ENCODE measurements at regions of chr1 and their contacts with region 1.

Region 1: GRCh38 chr1:202112839-202113672 is 9.7 kb upstream of the GPR37L1 start:
- DNase-seq: peak; percentile 62 to 85
- ATAC-seq: peak; percentile 76 to 80
- H3K4me3 ChIP-seq: no peak overlapping the region
- H3K27ac ChIP-seq: peak overlapping the region; percentile 88 to 94
- H3K4me1 ChIP-seq: peaks cover 73% of the 10 kb centered on the region
- CTCF ChIP-seq: no peak
- EP300 ChIP-seq: no peak; a peak in 1 of 5 replicates
- POLR2A ChIP-seq: no peak
- RAD21 ChIP-seq: peak; percentile 24 to 25; a peak in 3 of 5 replicates

Region 2: DNA sequence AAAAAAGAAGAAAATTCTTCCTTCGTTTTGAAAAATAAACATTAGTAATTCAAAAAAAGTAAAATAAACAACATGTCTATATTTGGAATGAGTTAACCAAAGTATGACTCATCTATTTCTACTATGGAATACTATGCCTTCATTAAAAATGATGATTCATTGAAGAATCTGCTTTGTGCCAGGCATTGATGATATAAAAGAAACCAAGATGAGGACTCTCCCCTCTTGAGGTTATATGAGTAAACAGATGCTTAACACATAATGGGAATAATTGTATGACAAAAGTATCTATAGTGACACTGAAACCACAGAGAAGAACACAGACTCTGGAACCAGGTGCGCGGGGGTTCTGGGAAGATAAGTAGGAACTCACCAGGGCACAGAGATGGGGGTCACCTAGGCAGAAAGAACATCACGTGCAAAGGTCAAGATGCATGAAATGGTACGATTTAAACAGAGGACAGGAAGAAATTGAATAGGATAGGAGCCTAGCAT is 83.8 kb before region 1 on chr1:
- CTCF ChIA-PET with region 1: interaction called, 1,624 read pairs
- POLR2A ChIA-PET with region 1: interaction called, 9 read pairs
- DNase-seq: peak; percentile 75 to 83
- ATAC-seq: peak; percentile 52 to 75; a peak in 3 of 6 replicates
- H3K4me3 ChIP-seq: no peak overlapping the region
- H3K27ac ChIP-seq: peak overlapping the region; percentile 61 to 86
- H3K4me1 ChIP-seq: peaks cover 52% of the 10 kb centered on the region
- CTCF ChIP-seq: no peak
- EP300 ChIP-seq: no peak
- POLR2A ChIP-seq: no peak
- RAD21 ChIP-seq: no peak

Region 3: DNA sequence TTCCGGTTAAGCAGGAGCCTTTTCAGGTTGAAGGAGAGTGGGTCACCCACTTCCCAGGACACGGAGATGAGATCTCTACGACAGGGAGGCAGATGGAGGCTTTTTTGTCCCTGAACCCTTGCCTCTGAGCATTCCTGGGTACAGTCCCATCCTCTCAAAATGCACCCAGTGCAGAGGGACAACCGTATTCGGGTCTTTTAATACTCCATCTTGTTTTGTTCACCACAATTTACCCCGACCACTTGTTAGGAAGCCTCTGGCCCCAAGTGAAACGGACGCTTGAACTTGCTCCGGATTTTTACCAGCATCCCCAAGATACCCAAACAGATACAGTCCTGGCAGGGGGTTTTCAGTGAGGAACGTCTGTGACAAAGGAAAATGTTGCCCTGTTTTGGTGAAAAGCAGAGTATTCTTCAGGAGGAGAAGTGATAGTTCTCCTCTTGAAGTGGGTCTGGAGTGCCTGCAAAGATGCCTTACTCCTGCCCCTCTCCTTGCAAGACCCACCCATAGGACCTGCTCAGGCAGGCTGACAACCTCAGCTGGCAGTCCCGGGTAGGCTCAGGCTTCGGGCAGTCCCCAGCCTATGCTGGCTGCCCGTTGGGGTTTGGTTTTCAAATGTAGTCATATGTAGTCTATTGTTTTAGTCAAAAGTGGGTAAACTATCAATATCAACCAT is 32.1 kb after region 1 on chr1:
- CTCF ChIA-PET with region 1: no interaction called
- POLR2A ChIA-PET with region 1: no interaction called
- DNase-seq: no peak
- ATAC-seq: peak; percentile 31 to 59; a peak in 3 of 6 replicates
- H3K4me3 ChIP-seq: peak overlapping the region; percentile 94
- H3K27ac ChIP-seq: peak overlapping the region; percentile 95 to 98
- H3K4me1 ChIP-seq: peaks cover 13% of the 10 kb centered on the region; the same call in 2 of the 3 replicates
- CTCF ChIP-seq: no peak
- EP300 ChIP-seq: no peak
- POLR2A ChIP-seq: no peak
- RAD21 ChIP-seq: no peak

Region 4: GRCh38 chr1:202164271-202165037 is 51.4 kb after region 1 on chr1:
- CTCF ChIA-PET with region 1: no interaction called
- POLR2A ChIA-PET with region 1: no interaction called
- DNase-seq: no peak
- ATAC-seq: peak in 1 of 2 experiments; percentile 13; a peak in 3 of 6 replicates
- H3K4me3 ChIP-seq: no peak overlapping the region
- H3K27ac ChIP-seq: no peak overlapping the region
- H3K4me1 ChIP-seq: peaks cover 8% of the 10 kb centered on the region; the same call in 2 of the 3 replicates
- CTCF ChIP-seq: no peak
- EP300 ChIP-seq: no peak
- POLR2A ChIP-seq: no peak
- RAD21 ChIP-seq: no peak

Region 5: GRCh38 chr1:202184750-202185460 is 71.8 kb after region 1 on chr1:
- CTCF ChIA-PET with region 1: no interaction called
- POLR2A ChIA-PET with region 1: no interaction called
- DNase-seq: peak; percentile 91 to 92
- ATAC-seq: peak; percentile 74 to 91
- H3K4me3 ChIP-seq: no peak overlapping the region
- H3K27ac ChIP-seq: peak overlapping the region in 1 of 2 experiments; percentile 42; a peak in 1 of 6 replicates
- H3K4me1 ChIP-seq: peaks cover 11% of the 10 kb centered on the region
- CTCF ChIP-seq: peak; percentile 91
- EP300 ChIP-seq: no peak
- POLR2A ChIP-seq: no peak
- RAD21 ChIP-seq: peak; percentile 78 to 84

Measured in A549 (cell line).